ENCODE measurements at regions of chr16 and their contacts with region 1.

Region 1: DNA sequence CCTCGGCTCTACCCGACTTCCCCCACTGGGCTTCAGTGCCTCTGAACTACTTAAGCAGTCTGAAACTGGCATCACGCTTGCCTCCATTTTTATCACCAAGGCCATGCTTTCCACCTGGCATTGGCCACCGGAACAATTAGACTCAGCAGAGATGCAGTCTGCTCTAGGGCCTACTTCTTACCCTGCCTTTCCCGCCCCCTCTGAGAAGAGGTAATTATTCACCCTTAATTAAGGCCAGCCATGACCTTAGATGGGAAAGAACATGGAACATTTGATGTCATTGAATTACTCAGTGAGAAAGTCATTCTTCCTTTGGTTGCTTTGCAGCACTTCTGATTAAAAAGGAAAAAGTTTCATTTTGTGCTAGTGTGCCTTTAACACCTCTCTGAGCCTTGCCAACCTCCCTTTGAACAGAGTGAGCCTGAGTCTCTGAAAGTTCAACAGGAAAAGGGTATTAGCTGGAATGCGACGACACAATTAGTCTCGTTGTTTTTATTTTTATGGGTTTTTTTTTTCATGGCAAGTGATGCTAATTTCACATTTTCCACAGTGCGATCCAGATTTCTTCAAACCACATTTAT is 60.9 kb upstream of the TNRC6A start:
- DNase-seq: peak; percentile 76
- ATAC-seq: peak; percentile 80
- H3K4me3 Mint-ChIP-seq: peak overlapping the region; percentile 47
- H3K27ac Mint-ChIP-seq: peak overlapping the region; percentile 87
- H3K4me1 Mint-ChIP-seq: peaks cover 57% of the 10 kb centered on the region
- H3K27me3 Mint-ChIP-seq: peaks cover 13% of the 10 kb centered on the region

Region 2: DNA sequence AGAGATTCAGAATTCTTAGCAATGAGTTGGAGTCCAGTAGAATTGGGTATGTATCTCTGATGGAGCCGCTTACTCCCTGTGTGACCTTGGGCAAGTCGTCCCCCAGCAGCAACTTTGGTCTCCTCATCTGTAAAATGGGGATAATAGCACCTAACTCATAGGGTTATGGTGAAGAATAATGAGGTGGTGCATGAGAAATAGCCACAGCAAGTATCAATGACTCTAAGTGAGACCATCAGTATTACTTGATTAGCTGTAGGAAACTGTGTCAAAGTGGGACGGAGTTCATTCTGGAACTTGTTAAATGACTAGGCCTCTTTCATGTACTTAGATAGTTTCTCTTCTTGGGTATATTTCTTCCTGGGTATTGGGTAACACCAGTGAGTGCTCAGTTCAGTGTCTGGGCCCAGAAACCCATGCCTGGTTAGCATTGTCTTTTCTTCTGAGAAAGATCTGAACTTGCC is 826.4 kb before region 1 on chr16:
- CTCF ChIA-PET with region 1: no interaction called
- POLR2A ChIA-PET with region 1: no interaction called
- intact Hi-C with region 1: loop called in 1 of 2 experiments (anchors 5 kb)
- DNase-seq: peak; percentile 67
- ATAC-seq: peak; percentile 91
- H3K4me3 Mint-ChIP-seq: no peak overlapping the region
- H3K27ac Mint-ChIP-seq: peak overlapping the region; percentile 85
- H3K4me1 Mint-ChIP-seq: peaks cover 83% of the 10 kb centered on the region
- H3K27me3 Mint-ChIP-seq: no peaks in the 10 kb centered on the region

Region 3: GRCh38 chr16:24539291-24539849 is 129.2 kb before region 1 on chr16 and contains the start of gene RBBP6:
- CTCF ChIA-PET with region 1: interaction called, 6 read pairs
- POLR2A ChIA-PET with region 1: interaction called, 3 read pairs
- intact Hi-C with region 1: loop called (anchors 1 to 2 kb)
- DNase-seq: peak; percentile 97
- ATAC-seq: peak; percentile 86
- H3K4me3 Mint-ChIP-seq: peak within 1 kb of the TSS; percentile 90
- H3K27ac Mint-ChIP-seq: peak within 1 kb of the TSS; percentile 100
- H3K4me1 Mint-ChIP-seq: peaks cover 20% of the 10 kb centered on the region
- H3K27me3 Mint-ChIP-seq: no peaks in the 10 kb centered on the region
- total RNA-seq, gene RBBP6: 70.7 to 71.1 TPM

Region 4: GRCh38 chr16:24748242-24748641 is 79.7 kb after region 1 on chr16:
- CTCF ChIA-PET with region 1: interaction called, 5 read pairs
- POLR2A ChIA-PET with region 1: interaction called, 5 read pairs
- intact Hi-C with region 1: loop called in 1 of 2 experiments (anchors 1 kb)
- DNase-seq: peak; percentile 40
- ATAC-seq: peak; percentile 91
- H3K4me3 Mint-ChIP-seq: no peak overlapping the region
- H3K27ac Mint-ChIP-seq: peak overlapping the region; percentile 66
- H3K4me1 Mint-ChIP-seq: peaks cover 86% of the 10 kb centered on the region
- H3K27me3 Mint-ChIP-seq: no peaks in the 10 kb centered on the region

Region 5: DNA sequence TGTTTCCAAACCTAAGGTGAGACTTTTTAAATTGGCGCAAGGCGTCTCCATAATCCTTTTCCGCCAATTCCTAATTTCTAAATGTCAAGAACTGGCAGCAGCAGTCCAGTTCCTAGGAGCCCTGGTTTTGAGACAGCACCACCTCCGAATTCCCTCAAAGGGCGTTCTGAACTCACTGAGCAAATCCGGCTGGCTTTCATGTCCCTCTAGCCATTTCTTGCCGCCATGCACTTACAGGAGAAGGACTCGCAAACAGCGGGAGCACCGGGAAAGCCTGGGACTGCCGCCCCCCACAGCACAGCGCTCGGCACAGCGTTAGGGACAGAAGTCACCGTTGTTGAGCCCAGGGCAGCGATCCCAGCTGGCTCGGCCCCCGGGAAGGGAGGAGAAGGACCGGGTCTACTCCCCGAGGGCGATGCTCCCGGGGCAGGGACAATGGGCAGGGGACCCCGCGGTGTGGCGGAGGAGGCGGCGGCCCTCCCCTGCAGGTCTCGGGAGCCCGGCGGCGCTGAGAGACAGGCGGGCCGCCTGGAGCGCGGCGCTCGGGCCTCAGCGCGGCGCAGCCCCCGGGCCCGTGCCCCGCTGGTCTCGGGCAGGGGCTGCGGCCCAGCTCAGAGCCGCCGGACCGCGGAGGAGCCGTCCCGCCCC is 346.1 kb after region 1 on chr16:
- CTCF ChIA-PET with region 1: no interaction called
- POLR2A ChIA-PET with region 1: no interaction called
- intact Hi-C with region 1: loop called in 1 of 2 experiments (anchors 10 kb)
- DNase-seq: peak; percentile 38
- ATAC-seq: peak; percentile 8
- H3K4me3 Mint-ChIP-seq: peak overlapping the region; percentile 96
- H3K27ac Mint-ChIP-seq: peak overlapping the region; percentile 94
- H3K4me1 Mint-ChIP-seq: peaks cover 81% of the 10 kb centered on the region
- H3K27me3 Mint-ChIP-seq: no peaks in the 10 kb centered on the region

Region 6: DNA sequence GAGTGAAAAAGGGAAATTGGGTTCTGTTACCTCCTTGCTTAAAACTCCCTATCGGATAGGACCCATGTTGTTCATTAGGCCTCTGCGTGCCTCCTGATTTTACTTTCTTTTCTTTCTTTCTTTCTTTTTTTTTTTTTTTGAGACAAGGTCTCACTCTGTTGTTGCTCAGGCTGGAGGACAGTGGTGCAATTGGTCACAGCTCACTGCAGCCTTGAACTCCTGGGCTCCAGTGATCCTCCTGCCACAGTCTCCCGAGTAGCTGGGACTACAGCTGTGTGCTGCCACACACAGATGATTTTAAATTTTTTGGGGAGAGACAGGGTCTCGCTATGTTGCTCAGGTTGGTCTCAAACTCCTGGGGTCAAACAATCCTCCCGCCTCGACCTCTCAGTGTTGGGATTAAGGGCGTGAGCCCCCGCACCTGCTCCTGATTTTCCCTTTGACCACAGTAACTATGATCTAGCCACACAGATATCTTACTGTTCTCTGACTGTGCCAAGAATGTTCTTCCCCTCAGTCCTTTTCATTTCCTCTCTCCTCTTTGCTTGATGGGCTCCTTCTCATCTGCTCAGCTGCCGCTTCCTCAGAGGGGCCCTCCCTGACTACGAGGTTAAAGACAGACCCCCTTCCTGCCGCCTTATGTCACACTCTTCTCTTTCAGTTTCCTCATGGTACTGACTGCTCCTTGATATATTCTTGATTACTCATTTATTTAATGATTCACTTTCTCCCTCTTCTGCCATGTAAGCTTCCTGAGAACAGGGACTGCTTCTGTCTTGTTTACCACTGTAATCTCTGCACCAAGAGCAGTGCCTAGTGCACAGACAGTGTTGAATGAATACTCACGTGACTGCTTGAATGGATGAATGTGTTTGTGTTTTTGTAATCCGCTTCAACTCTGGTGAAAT is 487.2 kb after region 1 on chr16:
- CTCF ChIA-PET with region 1: no interaction called
- POLR2A ChIA-PET with region 1: no interaction called
- intact Hi-C with region 1: no loop called
- DNase-seq: peak; percentile 70
- ATAC-seq: peak; percentile 95
- H3K4me3 Mint-ChIP-seq: peak overlapping the region; percentile 11
- H3K27ac Mint-ChIP-seq: peak overlapping the region; percentile 95
- H3K4me1 Mint-ChIP-seq: peaks cover 19% of the 10 kb centered on the region
- H3K27me3 Mint-ChIP-seq: no peaks in the 10 kb centered on the region

Measured in activated CD4-positive, alpha-beta T cell treated with anti-CD3 and anti-CD28 coated beads for 36 hours (primary cell).